GM18951 (cell line): ENCODE measurements at regions of chr1 and their contacts with region 1.

Region 1: DNA sequence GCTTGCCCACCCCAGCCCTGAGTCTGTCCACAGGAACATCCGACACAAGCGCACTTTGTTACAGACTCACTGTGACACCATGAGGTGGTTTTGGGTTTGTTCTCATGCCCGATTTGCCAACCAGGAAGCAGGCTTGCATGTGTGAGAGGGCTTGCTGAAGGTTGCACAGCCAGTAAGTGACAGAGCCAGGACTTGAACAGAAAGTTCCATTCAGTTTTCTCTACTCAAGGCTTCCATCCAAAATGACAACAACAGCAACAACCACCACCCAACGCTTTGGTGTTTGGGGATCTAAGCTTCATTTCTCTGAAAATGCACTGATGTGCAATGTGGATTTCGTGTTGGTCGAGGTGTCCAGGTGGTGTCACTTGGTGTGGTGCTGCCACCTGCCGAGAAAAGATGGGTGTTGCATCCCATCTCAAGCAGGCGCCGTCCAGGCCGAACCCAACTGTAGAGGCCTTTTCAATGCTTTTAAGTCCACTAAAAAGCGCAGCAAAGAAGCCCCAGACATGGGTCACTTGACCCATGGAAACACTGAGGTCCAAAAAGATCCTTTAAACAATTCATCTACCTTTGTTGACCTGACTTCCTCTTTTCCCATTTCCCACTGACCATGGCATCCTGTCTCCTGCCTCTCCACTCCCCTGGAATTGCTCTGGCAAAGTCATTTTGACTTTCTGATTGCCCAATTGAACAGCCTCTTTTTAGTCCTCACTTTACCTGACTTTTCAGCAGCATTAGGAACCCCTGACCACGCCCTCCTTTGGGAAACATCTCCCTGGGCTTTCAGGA is 12.2 kb downstream of the CITED4 start:
- POLR2A ChIP-seq: no peak

Region 2: DNA sequence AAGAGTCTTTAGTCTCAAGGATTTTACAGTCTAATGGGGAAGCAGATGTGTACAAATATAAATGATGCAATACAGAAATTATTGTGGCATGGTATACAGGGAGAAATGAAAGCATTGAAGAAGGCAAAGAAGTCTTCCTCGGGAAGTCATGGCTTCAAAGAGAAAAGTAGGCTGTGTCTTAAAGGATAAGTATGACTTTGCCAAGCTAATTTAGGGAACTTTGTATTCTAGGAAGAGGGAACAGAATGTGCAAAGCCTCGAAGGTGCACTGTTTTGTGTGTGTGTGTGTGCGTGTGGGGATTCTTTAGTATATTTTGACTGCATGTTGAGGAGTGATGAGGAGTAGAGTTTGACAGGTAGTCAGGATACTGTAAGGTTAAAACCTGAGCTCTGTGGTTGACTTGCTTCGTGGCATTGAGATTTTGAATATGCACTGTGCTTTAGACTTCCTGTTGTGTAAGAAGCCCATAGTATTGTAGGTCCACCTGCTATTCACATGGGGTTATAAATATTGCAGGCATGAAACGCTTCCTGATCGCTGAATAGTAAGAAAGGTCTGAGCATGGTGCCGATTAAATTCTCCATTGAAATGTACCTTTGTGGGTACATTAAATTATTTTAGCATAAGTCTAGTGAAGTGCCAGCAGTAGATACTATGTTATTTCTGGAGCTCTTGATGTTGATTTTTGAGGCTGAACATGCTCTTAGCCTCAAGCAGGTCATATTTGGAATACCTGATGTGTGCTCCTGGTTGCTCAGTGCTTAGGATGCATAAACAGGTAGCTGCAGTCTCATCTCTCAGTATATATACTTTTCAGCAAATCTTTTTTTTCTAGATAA is 468.5 kb before region 1 on chr1:
- in situ Hi-C with region 1: no loop called
- POLR2A ChIP-seq: peak; percentile 13

Region 3: GRCh38 chr1:40774266-40774998 is 75.6 kb before region 1 on chr1:
- in situ Hi-C with region 1: loop called (anchors 10 kb)
- POLR2A ChIP-seq: no peak

Region 4: GRCh38 chr1:41200728-41201127 is 350.7 kb after region 1 on chr1:
- in situ Hi-C with region 1: no loop called
- POLR2A ChIP-seq: no peak